Vagina (tissue), 2 donors: ENCODE measurements at regions of chr6 and their contacts with region 1.

Region 1: GRCh38 chr6:35634316-35634715 is 54.4 kb downstream of the FKBP5 start:
- DNase-seq: no peak
- H3K4me3 ChIP-seq: no peak overlapping the region
- H3K27ac ChIP-seq: peak overlapping the region; percentile 21
- H3K4me1 ChIP-seq: peaks cover 10% of the 10 kb centered on the region
- H3K27me3 ChIP-seq: no peaks in the 10 kb centered on the region
- CTCF ChIP-seq: no peak
- POLR2A ChIP-seq: no peak

Region 2: DNA sequence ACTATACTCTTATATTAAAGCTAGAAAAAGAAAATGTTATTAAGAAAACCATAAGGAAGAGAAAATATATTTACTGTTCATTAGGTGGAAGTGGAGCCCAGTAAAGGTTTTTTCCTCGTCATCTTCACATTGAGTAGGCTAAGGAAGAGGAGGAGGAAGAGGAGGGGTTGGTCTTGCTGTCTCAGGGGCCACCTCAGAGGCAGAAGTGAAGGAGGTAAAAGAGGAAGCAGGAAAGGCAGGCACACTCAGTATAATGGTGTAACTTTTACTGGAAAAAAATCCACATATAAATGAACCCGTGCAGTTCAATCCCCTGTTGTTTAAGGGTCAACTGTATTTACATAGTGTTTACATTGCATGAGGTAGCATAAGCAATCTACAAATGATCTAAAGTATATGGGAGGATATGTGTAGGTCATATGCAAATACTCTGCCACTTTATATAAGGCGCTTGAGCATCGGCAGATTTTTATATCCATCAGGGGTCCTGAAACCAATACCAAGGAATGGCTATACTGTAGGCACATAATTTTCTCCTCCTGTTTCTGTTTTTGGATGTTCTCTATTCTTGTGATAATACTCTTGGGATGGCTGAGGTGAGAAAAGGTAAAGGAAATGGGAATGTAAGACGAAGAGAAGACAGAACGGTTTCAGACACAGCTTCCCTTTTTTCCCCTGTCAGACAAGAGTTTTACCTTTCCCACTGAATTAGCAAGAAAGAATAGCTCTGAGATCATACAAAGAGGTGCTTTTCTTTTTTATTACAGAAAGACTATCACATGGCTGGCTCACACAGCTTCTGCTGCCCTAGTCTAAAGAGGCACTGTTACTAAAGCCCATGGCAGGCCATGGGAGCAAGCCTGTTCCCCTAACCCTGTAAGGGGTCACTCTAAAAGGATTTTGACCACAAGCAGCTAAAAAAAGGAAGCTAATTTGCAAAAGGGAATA is 1301.8 kb before region 1 on chr6:
- intact Hi-C with region 1: no loop called
- DNase-seq: no peak
- H3K4me3 ChIP-seq: no peak overlapping the region
- H3K27ac ChIP-seq: no peak overlapping the region
- H3K4me1 ChIP-seq: peaks cover 9% of the 10 kb centered on the region
- H3K27me3 ChIP-seq: no peaks in the 10 kb centered on the region
- CTCF ChIP-seq: no peak
- POLR2A ChIP-seq: no peak

Region 3: GRCh38 chr6:35688581-35689322 is 54.4 kb after region 1 on chr6 and contains the start of gene FKBP5:
- intact Hi-C with region 1: loop called (anchors 10 kb)
- DNase-seq: peak in 1 of 2 donors; percentile 96
- H3K4me3 ChIP-seq: peak within 1 kb of the TSS; percentile 97 to 99
- H3K27ac ChIP-seq: peak within 1 kb of the TSS; percentile 99
- H3K4me1 ChIP-seq: peaks cover 15% of the 10 kb centered on the region
- H3K27me3 ChIP-seq: no peaks in the 10 kb centered on the region
- CTCF ChIP-seq: peak in 1 of 3 experiments; percentile 9
- POLR2A ChIP-seq: peak; percentile 98
- total RNA-seq, gene FKBP5: 246 TPM